ENCODE measurements at regions of chr1 and their contacts with region 1.

Region 1: GRCh38 chr1:77484334-77484733 is 198.1 kb downstream of the ZZZ3 start:
- DNase-seq: no peak
- H3K4me3 ChIP-seq: no peak overlapping the region
- H3K27ac ChIP-seq: no peak overlapping the region
- H3K4me1 ChIP-seq: no peaks in the 10 kb centered on the region
- H3K27me3 ChIP-seq: no peaks in the 10 kb centered on the region
- CTCF ChIP-seq: no peak

Region 2: GRCh38 chr1:77468257-77468948 is 15.9 kb before region 1 on chr1:
- intact Hi-C with region 1: loop called (anchors 1 kb)
- DNase-seq: no peak
- H3K4me3 ChIP-seq: no peak overlapping the region
- H3K27ac ChIP-seq: peak overlapping the region; percentile 59 to 68
- H3K4me1 ChIP-seq: peaks cover 0 to 21% (median 12%) of the 10 kb centered on the region in 4 donors
- H3K27me3 ChIP-seq: no peaks in the 10 kb centered on the region
- CTCF ChIP-seq: no peak